ENCODE measurements at regions of chr1 and their contacts with region 1.

Region 1: DNA sequence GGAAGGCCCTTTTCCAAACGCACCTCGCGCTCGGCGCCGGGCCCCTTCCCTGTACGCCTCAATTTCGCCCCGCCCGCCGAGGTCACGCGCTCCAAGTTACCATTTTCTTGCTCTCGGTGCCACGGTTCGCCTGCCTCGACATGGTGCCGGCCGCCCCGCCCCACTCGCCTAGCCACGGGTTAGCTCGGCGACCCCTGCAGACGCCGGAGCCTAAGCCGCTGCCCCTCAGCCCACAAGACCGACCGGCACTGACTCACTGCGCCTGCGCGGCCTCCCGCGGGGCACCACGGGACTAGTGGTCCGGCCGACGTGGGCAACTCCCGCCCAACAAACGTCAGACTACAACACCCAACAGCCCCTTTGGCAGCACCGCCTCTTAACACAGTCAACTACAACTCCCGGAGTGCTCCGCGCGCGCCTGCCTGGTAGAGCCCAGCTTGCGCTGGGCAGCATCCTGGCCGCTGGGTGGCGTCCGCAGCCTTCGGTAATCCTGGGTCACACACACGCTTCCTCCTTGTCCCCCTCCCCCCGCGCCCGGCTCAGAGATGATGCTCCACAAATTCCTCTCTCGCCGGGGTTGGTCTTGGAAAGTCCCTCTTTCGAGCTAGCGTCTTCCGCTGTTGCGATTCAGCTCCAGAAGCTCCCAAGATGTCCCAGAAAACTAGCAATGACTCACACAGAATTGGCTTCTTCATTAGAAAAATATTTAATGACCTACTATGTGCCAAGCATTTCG is at the start of gene TRAPPC3:
- DNase-seq: peak; percentile 99
- H3K4me3 ChIP-seq: peak within 1 kb of the TSS; percentile 97
- H3K27me3 ChIP-seq: no peaks in the 10 kb centered on the region
- CTCF ChIP-seq: peak; percentile 96
- polyA plus RNA-seq, gene TRAPPC3: 65.4 and 95.8 TPM in 2 replicates

Region 2: DNA sequence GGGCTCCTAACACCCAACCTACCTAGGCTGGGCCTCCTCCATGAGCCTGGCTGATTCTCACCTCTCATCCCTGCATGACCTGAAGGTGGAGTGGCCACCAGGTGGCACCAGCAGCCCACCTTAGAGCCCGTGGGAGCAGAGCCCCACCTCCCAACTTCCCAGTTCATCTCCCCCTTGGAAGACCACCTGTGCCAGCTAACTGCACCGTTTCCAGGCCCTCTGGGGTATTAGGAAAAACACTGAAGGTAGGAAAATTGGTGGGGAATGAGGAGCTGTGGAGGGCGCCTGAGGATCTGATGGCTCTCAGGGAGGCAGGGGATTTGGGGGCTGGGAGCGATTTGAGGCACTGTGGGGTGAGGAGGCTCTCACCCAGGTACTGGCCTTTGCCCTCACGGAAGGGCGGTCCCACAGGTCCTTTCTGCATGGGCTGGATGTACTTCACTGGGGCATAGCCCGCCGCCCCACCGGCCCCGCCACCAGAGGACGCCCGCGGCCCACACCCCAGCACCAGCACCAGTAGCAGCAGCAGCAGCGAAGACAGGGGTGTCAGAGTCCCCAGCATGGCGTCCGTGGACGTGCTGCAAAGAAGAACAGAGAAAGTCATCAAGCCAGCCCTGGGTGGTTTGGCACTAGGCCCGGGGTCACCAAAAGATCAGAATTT is 49.6 kb before region 1 on chr1:
- CTCF ChIA-PET with region 1: interaction called, 48 read pairs
- POLR2A ChIA-PET with region 1: no interaction called
- DNase-seq: no peak
- H3K4me3 ChIP-seq: no peak overlapping the region
- H3K27me3 ChIP-seq: no peaks in the 10 kb centered on the region
- CTCF ChIP-seq: peak; percentile 79

Region 3: GRCh38 chr1:36160949-36161485 is 11.6 kb after region 1 on chr1:
- CTCF ChIA-PET with region 1: interaction called, 33 read pairs
- POLR2A ChIA-PET with region 1: interaction called, 9 read pairs
- DNase-seq: no peak
- H3K4me3 ChIP-seq: peak overlapping the region; percentile 43
- H3K27me3 ChIP-seq: no peaks in the 10 kb centered on the region
- CTCF ChIP-seq: peak; percentile 53

Region 4: GRCh38 chr1:36187800-36188593 is 38.6 kb after region 1 on chr1:
- CTCF ChIA-PET with region 1: interaction called, 94 read pairs
- POLR2A ChIA-PET with region 1: no interaction called
- DNase-seq: peak; percentile 50
- H3K4me3 ChIP-seq: no peak overlapping the region
- H3K27me3 ChIP-seq: no peaks in the 10 kb centered on the region
- CTCF ChIP-seq: peak; percentile 87

Region 5: DNA sequence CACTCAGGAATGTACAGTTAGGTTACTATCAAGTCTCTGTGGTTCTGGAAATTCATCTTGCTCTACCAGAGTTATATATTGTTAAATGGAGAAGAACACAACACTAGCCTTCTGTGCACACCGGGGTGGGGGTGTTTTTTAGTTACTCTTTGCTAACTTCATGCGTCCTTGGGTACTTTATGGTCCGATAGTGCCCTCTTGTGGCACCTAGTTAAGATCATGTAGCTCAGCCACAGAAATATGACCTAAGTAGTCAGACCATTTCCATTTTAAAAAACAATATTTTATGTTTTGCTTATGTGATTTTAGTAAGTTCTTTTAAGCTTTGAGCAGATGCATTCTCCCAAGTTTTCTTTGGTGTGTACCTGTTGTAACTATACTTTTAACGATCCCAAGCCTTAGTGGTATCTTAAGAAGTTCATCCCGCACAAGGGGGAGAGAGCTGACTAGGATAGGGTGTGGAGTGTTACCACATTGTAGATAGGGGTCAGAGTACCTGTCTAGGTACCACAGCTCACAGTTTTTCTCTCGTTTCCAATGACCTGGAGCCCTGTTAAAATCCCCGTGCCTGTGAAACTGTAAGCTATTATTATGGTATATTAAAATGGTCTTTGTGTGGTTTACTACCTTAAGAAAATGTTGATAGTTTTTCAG is 136.2 kb after region 1 on chr1:
- CTCF ChIA-PET with region 1: interaction called, 29 read pairs
- POLR2A ChIA-PET with region 1: no interaction called
- DNase-seq: no peak
- H3K4me3 ChIP-seq: no peak overlapping the region
- H3K27me3 ChIP-seq: no peaks in the 10 kb centered on the region
- CTCF ChIP-seq: peak; percentile 68

Region 6: GRCh38 chr1:36323597-36324352 is 174.4 kb after region 1 on chr1 and contains the start of gene EVA1B:
- CTCF ChIA-PET with region 1: interaction called, 12 read pairs
- POLR2A ChIA-PET with region 1: no interaction called
- DNase-seq: peak; percentile 52
- H3K4me3 ChIP-seq: peak within 1 kb of the TSS; percentile 81
- H3K27me3 ChIP-seq: no peaks in the 10 kb centered on the region
- CTCF ChIP-seq: no peak
- polyA plus RNA-seq, gene EVA1B: 101 and 133 TPM in 2 replicates

Measured in BJ (cell line).